CD4-positive, alpha-beta memory T cell (primary cell): ENCODE measurements at regions of chr19 and their contacts with region 1.

Region 1: GRCh38 chr19:46030812-46031550 is 8.1 kb upstream of the PGLYRP1 start:
- DNase-seq: no peak
- H3K4me3 ChIP-seq: no peak overlapping the region
- H3K4me3 Mint-ChIP-seq: no peak overlapping the region
- H3K27ac ChIP-seq: no peak overlapping the region
- H3K27ac Mint-ChIP-seq: no peak overlapping the region
- H3K4me1 ChIP-seq: peaks cover 5% of the 10 kb centered on the region
- H3K4me1 Mint-ChIP-seq: peaks cover 5 to 16% (median 12%) of the 10 kb centered on the region in 4 donors
- H3K27me3 ChIP-seq: no peaks in the 10 kb centered on the region
- H3K27me3 Mint-ChIP-seq: peaks cover 4 to 11% of the 10 kb centered on the region in 2 donors

Region 2: DNA sequence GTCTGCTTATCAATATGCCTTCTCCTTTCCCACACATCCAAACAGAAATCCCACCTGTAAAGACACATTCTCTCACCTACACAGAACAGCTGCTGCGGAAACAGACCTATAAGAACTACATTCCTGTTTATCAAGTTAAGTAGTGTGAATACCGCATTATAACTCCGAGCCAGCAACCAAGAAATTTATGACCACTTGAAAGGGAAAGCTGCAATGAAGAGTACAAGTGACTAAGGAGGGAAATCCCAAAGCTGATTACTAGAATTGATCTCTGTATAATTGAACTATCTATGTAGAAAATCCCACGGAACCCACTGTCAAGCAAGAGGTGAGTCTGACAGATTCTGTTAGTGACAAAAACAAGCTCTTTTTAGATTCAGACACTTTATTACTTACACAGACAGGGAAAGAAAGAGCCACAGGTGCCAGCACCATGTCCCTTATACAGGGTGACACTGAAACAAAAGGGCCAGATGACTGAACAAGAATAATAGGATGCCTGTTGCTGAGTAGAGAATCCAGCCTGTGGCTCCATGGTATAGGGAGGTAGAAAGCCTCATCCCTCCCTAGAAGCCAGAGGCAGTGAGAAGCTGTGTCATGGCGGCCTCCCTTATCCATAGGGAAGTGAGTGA is 11.4 kb after region 1 on chr19:
- CTCF ChIA-PET with region 1: interaction called, 10 read pairs
- POLR2A ChIA-PET with region 1: no interaction called
- intact Hi-C with region 1: no loop called
- DNase-seq: no peak
- H3K4me3 ChIP-seq: no peak overlapping the region
- H3K4me3 Mint-ChIP-seq: no peak overlapping the region
- H3K27ac ChIP-seq: no peak overlapping the region
- H3K27ac Mint-ChIP-seq: no peak overlapping the region
- H3K4me1 ChIP-seq: no peaks in the 10 kb centered on the region
- H3K4me1 Mint-ChIP-seq: no peaks in the 10 kb centered on the region
- H3K27me3 ChIP-seq: peaks cover 21% of the 10 kb centered on the region
- H3K27me3 Mint-ChIP-seq: peaks cover 44 to 46% of the 10 kb centered on the region in 2 donors

Region 3: GRCh38 chr19:46189971-46190888 is 159.2 kb after region 1 on chr19:
- CTCF ChIA-PET with region 1: no interaction called
- POLR2A ChIA-PET with region 1: no interaction called
- intact Hi-C with region 1: loop called (anchors 1 kb)
- DNase-seq: no peak
- H3K4me3 ChIP-seq: no peak overlapping the region
- H3K4me3 Mint-ChIP-seq: no peak overlapping the region
- H3K27ac ChIP-seq: no peak overlapping the region
- H3K27ac Mint-ChIP-seq: peak overlapping the region in 1 of 7 donors; percentile 29
- H3K4me1 ChIP-seq: no peaks in the 10 kb centered on the region
- H3K4me1 Mint-ChIP-seq: peaks cover 0 to under 1% (median 0%) of the 10 kb centered on the region in 4 donors
- H3K27me3 ChIP-seq: peaks cover 5% of the 10 kb centered on the region
- H3K27me3 Mint-ChIP-seq: peaks cover 17 to 42% of the 10 kb centered on the region in 2 donors

Region 4: GRCh38 chr19:46265217-46265828 is 234.3 kb after region 1 on chr19:
- CTCF ChIA-PET with region 1: interaction called, 88 read pairs
- POLR2A ChIA-PET with region 1: no interaction called
- intact Hi-C with region 1: loop called (anchors 1 kb)
- DNase-seq: peak; percentile 72 to 75 (median 73)
- H3K4me3 ChIP-seq: no peak overlapping the region
- H3K4me3 Mint-ChIP-seq: no peak overlapping the region
- H3K27ac ChIP-seq: no peak overlapping the region
- H3K27ac Mint-ChIP-seq: peak overlapping the region in 1 of 7 donors; percentile 24
- H3K4me1 ChIP-seq: peaks cover 18% of the 10 kb centered on the region
- H3K4me1 Mint-ChIP-seq: peaks cover 6 to 29% (median 17%) of the 10 kb centered on the region in 4 donors
- H3K27me3 ChIP-seq: peaks cover under 1% of the 10 kb centered on the region
- H3K27me3 Mint-ChIP-seq: peaks cover 10 to 25% of the 10 kb centered on the region in 2 donors